Endothelial cell of umbilical vein (primary cell): ENCODE measurements at regions of chrX and their contacts with region 1.

Region 1: DNA sequence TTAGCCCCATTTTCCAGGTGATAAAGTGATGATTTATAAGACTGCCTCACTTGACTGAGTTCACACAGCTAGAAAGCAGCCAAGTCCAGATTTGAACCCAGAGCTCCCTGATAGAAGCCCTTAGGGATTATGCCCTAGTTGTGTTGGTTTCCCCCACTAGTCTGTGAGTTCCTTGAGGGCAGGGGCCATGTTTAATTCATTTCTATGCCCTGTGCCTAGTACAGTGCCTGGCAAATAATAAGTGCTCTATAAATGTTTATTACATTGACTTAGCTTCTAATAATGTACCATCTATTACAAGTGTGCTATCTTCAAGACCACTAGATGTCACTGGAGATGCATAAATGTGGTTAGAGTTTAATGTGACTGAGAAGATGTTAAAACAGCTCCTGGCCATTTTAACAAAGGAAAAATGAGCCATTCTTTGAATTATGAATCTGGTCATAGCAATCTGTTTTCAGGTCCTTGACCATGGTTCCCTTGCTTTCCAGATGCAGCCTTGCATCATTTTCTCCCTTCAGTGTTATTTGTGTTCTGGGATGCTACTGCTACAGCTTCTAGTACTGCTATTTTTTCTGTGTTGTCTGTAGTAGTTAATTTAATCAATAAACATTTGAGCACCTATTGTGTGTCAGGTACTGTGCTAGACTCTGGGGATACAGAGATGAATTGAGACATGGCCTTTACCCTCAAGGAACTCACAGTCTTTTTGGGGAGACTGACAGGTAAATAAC is 43.2 kb downstream of the SLC9A6 start:
- DNase-seq: peak; percentile 67
- H3K4me3 ChIP-seq: no peak overlapping the region
- H3K27ac ChIP-seq: no peak overlapping the region
- H3K4me1 ChIP-seq: peaks cover 18% of the 10 kb centered on the region
- H3K27me3 ChIP-seq: no peaks in the 10 kb centered on the region
- CTCF ChIP-seq: peak; percentile 21 to 24
- POLR2A ChIP-seq: no peak

Region 2: GRCh38 chrX:136015016-136015415 is 13.4 kb before region 1 on chrX:
- CTCF ChIA-PET with region 1: interaction called, 13 read pairs
- POLR2A ChIA-PET with region 1: no interaction called
- dilution Hi-C with region 1: no loop called
- intact Hi-C with region 1: no loop called
- DNase-seq: no peak
- H3K4me3 ChIP-seq: no peak overlapping the region
- H3K27ac ChIP-seq: no peak overlapping the region
- H3K4me1 ChIP-seq: peaks cover 2% of the 10 kb centered on the region
- H3K27me3 ChIP-seq: no peaks in the 10 kb centered on the region
- CTCF ChIP-seq: no peak
- POLR2A ChIP-seq: no peak

Region 3: DNA sequence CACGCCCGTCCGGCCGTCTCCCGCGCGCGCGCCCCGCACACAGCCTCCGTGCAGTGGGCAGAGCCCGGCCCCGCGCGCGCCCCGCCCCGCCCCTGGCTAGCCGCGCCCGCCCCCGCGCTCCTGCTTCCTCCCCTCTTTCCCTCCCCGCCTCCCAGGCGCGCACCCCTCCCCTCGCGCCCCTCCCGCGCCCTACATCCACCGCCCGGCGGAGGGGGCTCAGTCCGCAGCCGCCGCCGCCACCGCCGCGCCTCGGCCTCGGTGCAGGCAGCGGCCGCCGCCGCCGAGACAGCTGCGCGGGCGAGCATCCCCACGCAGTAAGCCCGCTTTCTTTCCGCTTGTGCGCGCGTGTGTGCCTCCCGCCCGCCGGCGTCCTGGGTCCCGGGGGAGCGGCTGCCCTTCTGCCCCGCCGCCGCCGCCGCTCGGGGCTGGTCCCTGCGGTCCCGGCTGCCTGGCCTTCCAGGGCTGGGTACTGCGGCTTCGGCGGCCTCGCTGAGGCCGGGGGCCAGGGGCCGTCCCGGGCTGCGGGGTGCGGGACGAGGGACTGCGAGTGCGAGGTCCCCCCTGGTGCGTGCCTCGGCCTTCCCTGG is 119.0 kb after region 1 on chrX and contains the start of gene FHL1:
- CTCF ChIA-PET with region 1: interaction called, 7 read pairs
- POLR2A ChIA-PET with region 1: no interaction called
- dilution Hi-C with region 1: no loop called
- intact Hi-C with region 1: loop called (anchors 5 kb)
- DNase-seq: peak; percentile 32
- H3K4me3 ChIP-seq: peak within 1 kb of the TSS; percentile 56 to 62 (median 61)
- H3K27ac ChIP-seq: no peak within 1 kb of the TSS
- H3K4me1 ChIP-seq: peaks cover 2% of the 10 kb centered on the region
- H3K27me3 ChIP-seq: peaks cover 0 to 2% of the 10 kb centered on the region in 2 experiments
- CTCF ChIP-seq: no peak
- POLR2A ChIP-seq: no peak
- total RNA-seq, gene FHL1: 59.4 and 73.2 TPM in 2 replicates

Region 4: DNA sequence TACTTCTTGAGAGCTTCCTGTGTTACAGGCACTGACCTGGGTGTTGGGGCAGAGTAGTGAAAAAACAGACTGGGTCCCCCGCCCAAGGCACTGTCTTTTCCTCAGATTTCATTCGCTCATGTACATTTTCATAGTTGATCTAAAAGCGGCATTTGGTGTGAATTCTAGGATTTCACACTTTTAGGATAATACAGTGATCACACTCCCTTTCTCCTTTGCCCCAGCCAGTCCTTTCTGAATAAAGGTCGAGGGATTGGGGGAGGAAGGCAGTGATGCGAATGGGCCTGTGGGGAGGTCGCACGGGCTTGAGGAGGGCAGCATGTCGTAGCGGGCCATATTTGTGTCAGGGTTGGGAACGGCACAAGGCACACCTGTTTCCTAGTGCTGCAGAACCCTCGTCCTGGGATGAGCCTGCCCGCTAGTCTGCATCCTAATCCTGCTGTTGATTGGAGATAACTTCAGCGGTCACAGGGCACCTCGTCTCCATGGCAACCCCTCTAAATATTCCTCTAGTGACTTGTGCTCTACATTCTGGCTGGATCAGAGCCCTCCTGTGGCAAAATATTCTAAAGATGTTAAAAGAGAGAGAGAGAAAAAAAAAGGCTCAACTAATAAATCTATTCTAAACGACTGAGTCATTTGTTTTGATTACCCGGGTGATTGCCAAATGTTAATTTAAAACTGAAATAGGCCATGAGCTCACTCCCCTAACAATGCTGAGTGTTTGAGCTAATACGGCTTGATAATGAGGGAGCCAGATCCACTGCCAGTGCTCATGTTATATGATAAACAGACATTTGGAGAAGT is 140.7 kb after region 1 on chrX:
- CTCF ChIA-PET with region 1: interaction called, 269 read pairs
- POLR2A ChIA-PET with region 1: no interaction called
- dilution Hi-C with region 1: no loop called
- intact Hi-C with region 1: loop called (anchors 1 kb)
- DNase-seq: peak; percentile 92
- H3K4me3 ChIP-seq: no peak overlapping the region
- H3K27ac ChIP-seq: peak overlapping the region; percentile 64
- H3K4me1 ChIP-seq: peaks cover 19% of the 10 kb centered on the region
- H3K27me3 ChIP-seq: no peaks in the 10 kb centered on the region
- CTCF ChIP-seq: no peak
- POLR2A ChIP-seq: no peak

Region 5: DNA sequence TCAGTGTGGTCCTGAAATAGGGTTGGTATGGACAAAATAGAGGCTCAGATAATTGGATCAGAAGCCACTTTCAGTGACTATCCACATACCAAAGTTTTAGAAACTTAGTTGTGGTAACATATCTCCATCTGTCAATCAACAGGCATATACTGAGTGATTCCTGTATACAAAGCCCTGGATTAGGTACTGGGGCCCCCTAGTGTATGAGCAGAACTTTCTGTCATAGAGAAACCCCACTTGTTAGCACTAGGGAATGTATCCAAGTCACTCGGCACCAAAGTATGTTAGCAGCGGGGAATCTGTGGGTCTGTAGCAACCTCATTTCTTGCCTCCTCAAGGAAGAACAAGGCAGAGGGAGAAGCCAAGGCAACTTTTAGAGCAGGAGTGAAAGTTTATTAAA is 172.0 kb after region 1 on chrX:
- CTCF ChIA-PET with region 1: interaction called, 30 read pairs
- POLR2A ChIA-PET with region 1: no interaction called
- dilution Hi-C with region 1: no loop called
- intact Hi-C with region 1: loop called (anchors 1 kb)
- DNase-seq: peak; percentile 45
- H3K4me3 ChIP-seq: no peak overlapping the region
- H3K27ac ChIP-seq: no peak overlapping the region
- H3K4me1 ChIP-seq: peaks cover 13% of the 10 kb centered on the region
- H3K27me3 ChIP-seq: no peaks in the 10 kb centered on the region
- CTCF ChIP-seq: peak; percentile 18 to 34
- POLR2A ChIP-seq: no peak

Region 6: GRCh38 chrX:136268051-136269048 is 239.9 kb after region 1 on chrX:
- CTCF ChIA-PET with region 1: interaction called, 28 read pairs
- POLR2A ChIA-PET with region 1: no interaction called
- dilution Hi-C with region 1: no loop called
- intact Hi-C with region 1: loop called (anchors 1 kb)
- DNase-seq: peak; percentile 52
- H3K4me3 ChIP-seq: no peak overlapping the region
- H3K27ac ChIP-seq: no peak overlapping the region
- H3K4me1 ChIP-seq: peaks cover 21% of the 10 kb centered on the region
- H3K27me3 ChIP-seq: no peaks in the 10 kb centered on the region
- CTCF ChIP-seq: peak; percentile 54 to 58
- POLR2A ChIP-seq: no peak

Region 7: DNA sequence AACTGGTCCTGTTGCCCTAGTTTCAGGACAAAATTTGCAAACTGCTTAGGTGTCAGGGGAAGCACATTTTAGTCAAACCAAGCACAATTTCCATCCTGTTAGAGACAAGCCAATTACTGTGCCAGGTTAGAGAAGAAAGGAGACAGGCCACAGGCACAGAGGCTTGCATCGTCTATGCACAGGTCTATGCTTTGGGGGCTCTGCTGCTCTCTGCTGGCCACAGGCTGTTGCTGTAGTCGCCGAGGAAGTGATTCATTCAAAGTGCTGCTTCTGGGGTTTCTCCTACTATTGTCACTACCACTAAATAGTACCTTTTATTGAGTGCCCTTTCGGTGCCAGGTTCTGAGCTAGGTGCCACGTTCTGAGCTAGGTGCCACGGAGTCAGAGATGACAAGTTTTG is 549.1 kb after region 1 on chrX:
- CTCF ChIA-PET with region 1: interaction called, 23 read pairs
- POLR2A ChIA-PET with region 1: no interaction called
- dilution Hi-C with region 1: no loop called
- intact Hi-C with region 1: loop called (anchors 1 kb)
- DNase-seq: peak; percentile 36
- H3K4me3 ChIP-seq: no peak overlapping the region
- H3K27ac ChIP-seq: no peak overlapping the region
- H3K4me1 ChIP-seq: no peaks in the 10 kb centered on the region
- H3K27me3 ChIP-seq: no peaks in the 10 kb centered on the region
- CTCF ChIP-seq: peak; percentile 49 to 72
- POLR2A ChIP-seq: no peak